Heart right ventricle (tissue), 16 donors: ENCODE measurements at regions of chr7 and their contacts with region 1.

Region 1: GRCh38 chr7:149669121-149669818 is 104.1 kb downstream of the ZNF467 start:
- DNase-seq: no peak
- ATAC-seq: no peak
- H3K4me3 ChIP-seq: no peak overlapping the region
- H3K27ac ChIP-seq: no peak overlapping the region
- H3K4me1 ChIP-seq: peaks cover 0 to 13% (median 5%) of the 10 kb centered on the region in 9 donors
- H3K27me3 ChIP-seq: peaks cover 0 to 6% (median 0%) of the 10 kb centered on the region in 7 donors
- CTCF ChIP-seq: peak in 7 of 9 donors; percentile 30 to 56 (median 48)

Region 2: DNA sequence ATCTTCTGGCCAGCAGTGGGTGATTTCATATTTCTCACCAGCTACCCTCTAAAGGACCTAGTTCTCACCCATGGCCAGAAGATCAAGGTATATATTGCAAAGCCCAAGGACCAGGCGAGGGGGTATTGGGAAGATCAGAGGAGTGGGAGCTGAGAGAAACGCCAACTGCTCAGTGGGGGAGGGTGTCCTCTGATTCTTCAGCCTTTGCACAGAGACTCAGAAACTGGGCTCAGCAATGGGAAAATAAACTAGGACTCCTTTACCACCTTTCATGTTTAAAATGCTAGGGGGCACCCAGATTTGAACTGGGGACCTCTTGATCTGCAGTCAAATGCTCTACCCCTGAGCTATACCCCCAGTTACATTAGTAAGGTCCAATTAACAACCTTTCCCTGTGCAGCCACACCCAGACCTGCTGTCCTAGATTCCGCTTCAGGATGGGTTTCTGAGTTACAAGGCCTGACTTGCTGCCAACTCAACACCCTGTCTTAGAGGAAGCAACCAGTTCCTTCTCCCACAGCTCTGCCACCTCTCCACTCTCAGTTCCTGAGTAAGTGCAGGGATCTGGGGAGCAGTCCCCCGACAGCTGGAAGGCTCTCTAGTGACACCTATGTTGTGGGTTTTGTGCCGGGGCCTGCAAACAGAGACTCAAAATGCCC is 313.8 kb before region 1 on chr7:
- intact Hi-C with region 1: no loop called
- DNase-seq: no peak
- ATAC-seq: no peak
- H3K4me3 ChIP-seq: no peak overlapping the region
- H3K27ac ChIP-seq: no peak overlapping the region
- H3K4me1 ChIP-seq: no peaks in the 10 kb centered on the region
- H3K27me3 ChIP-seq: no peaks in the 10 kb centered on the region
- CTCF ChIP-seq: no peak

Region 3: DNA sequence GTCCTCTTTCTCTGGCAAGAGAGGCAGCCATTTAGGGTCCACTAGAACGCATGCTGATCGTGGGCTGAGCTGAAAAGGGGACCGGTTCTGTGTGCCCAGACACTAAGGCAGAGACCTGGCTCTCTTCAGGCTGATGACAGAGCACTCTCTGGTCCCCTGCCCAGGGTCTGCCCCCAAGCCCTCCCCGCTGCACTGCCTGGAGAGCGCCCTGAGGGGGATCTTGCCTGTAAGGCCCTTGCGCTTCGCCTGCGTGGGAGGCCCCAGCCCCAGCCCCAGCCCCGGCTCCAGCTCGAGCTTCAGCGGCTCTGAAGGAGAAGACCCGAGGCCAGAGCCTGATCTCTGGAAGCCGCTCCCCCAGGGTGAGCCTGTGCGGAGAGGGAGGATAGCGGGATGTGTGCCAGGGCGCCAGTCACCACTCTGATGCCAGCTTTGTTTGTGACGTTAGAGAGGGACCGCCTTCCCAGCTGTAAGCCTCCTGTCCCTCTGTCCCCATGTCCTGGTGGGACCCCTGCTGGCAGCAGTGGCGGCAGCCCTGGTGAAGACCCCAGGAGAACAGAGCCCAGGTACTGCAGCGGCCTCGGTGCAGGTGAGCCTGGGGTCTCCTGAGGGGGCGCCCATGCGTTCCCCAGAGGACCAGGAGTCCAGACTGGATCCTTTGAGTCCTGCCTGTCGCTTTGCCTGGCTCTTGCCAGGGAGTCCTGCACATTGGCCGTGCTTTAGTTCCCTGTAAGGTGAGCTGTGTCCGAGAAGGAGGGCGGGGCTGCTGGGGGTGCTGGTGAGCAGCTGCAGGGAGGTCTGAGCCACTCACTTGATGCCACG is 60.9 kb after region 1 on chr7:
- intact Hi-C with region 1: loop called in 1 of 10 experiments (anchors 5 kb)
- DNase-seq: peak; percentile 58 to 65
- ATAC-seq: peak; percentile 59 to 89 (median 79)
- H3K4me3 ChIP-seq: no peak overlapping the region
- H3K27ac ChIP-seq: peak overlapping the region in 8 of 10 donors; percentile 35 to 77 (median 59)
- H3K4me1 ChIP-seq: peaks cover 0 to 22% (median 6%) of the 10 kb centered on the region in 9 donors
- H3K27me3 ChIP-seq: no peaks in the 10 kb centered on the region
- CTCF ChIP-seq: peak in 5 of 9 donors; percentile 24 to 55 (median 49)

Region 4: DNA sequence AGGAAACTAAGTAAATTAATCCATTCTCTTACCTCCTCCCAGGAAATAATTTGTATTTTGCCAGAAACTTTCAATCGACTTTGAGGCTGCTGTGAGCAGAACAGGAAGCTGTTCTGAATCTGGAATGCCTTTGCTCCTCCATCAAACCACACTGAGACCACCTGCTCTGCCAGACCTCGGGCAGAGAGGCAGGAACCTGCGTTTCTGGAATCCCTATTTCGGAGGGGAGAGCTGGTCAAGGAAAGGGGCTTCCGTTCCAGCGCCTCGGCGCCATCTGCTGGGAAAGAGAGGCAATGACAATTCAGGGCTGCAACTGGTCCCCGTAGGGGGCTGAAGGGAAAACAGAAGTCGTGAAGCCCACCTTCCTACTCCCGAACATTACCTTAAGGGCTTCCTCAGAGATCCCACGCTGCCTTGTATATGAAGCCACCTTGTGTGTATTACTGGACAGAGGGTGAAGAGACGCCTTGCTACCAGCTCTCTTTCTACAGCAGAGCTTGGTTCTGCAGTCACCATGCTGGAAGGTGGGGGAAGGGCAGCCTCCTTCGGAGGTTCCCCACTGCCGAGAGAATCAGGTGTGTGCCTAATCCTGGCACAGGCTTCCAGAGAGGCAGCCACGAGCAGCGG is 72.9 kb after region 1 on chr7:
- intact Hi-C with region 1: loop called in 8 of 10 experiments (anchors 2 to 5 kb)
- DNase-seq: peak; percentile 69 to 70
- ATAC-seq: peak; percentile 76 to 92 (median 88)
- H3K4me3 ChIP-seq: peak overlapping the region in 9 of 10 donors; percentile 24 to 50 (median 43)
- H3K27ac ChIP-seq: peak overlapping the region in 2 of 10 donors; percentile 32 to 36
- H3K4me1 ChIP-seq: peaks cover 5 to 14% (median 10%) of the 10 kb centered on the region in 9 donors
- H3K27me3 ChIP-seq: peaks cover 0 to 10% (median 0%) of the 10 kb centered on the region in 7 donors
- CTCF ChIP-seq: peak; percentile 71 to 96 (median 92)

Region 5: GRCh38 chr7:149752646-149753045 is 83.4 kb after region 1 on chr7:
- intact Hi-C with region 1: no loop called
- DNase-seq: no peak
- ATAC-seq: peak in 1 of 8 donors; percentile 42
- H3K4me3 ChIP-seq: no peak overlapping the region
- H3K27ac ChIP-seq: no peak overlapping the region
- H3K4me1 ChIP-seq: no peaks in the 10 kb centered on the region
- H3K27me3 ChIP-seq: no peaks in the 10 kb centered on the region
- CTCF ChIP-seq: no peak

Region 6: GRCh38 chr7:149799397-149800171 is 130.3 kb after region 1 on chr7:
- intact Hi-C with region 1: no loop called
- DNase-seq: no peak
- ATAC-seq: peak in 1 of 8 donors; percentile 12
- H3K4me3 ChIP-seq: no peak overlapping the region
- H3K27ac ChIP-seq: no peak overlapping the region
- H3K4me1 ChIP-seq: no peaks in the 10 kb centered on the region
- H3K27me3 ChIP-seq: peaks cover 0 to 6% (median 0%) of the 10 kb centered on the region in 7 donors
- CTCF ChIP-seq: peak in 8 of 9 donors; percentile 11 to 57 (median 43)